Calu3 (cell line): ENCODE measurements at regions of chr2 and their contacts with region 1.

Region 1: GRCh38 chr2:225735844-225736243 is 336.3 kb downstream of the NYAP2 start:
- DNase-seq: peak; percentile 27
- H3K4me3 Mint-ChIP-seq: no peak overlapping the region
- H3K27ac Mint-ChIP-seq: no peak overlapping the region
- H3K4me1 Mint-ChIP-seq: peaks cover 46% of the 10 kb centered on the region
- H3K27me3 Mint-ChIP-seq: no peaks in the 10 kb centered on the region
- CTCF ChIP-seq: no peak

Region 2: GRCh38 chr2:225788571-225789094 is 52.8 kb after region 1 on chr2:
- CTCF ChIA-PET with region 1: no interaction called
- intact Hi-C with region 1: no loop called
- DNase-seq: no peak
- H3K4me3 Mint-ChIP-seq: no peak overlapping the region
- H3K27ac Mint-ChIP-seq: no peak overlapping the region
- H3K4me1 Mint-ChIP-seq: no peaks in the 10 kb centered on the region
- H3K27me3 Mint-ChIP-seq: no peaks in the 10 kb centered on the region
- CTCF ChIP-seq: no peak

Region 3: DNA sequence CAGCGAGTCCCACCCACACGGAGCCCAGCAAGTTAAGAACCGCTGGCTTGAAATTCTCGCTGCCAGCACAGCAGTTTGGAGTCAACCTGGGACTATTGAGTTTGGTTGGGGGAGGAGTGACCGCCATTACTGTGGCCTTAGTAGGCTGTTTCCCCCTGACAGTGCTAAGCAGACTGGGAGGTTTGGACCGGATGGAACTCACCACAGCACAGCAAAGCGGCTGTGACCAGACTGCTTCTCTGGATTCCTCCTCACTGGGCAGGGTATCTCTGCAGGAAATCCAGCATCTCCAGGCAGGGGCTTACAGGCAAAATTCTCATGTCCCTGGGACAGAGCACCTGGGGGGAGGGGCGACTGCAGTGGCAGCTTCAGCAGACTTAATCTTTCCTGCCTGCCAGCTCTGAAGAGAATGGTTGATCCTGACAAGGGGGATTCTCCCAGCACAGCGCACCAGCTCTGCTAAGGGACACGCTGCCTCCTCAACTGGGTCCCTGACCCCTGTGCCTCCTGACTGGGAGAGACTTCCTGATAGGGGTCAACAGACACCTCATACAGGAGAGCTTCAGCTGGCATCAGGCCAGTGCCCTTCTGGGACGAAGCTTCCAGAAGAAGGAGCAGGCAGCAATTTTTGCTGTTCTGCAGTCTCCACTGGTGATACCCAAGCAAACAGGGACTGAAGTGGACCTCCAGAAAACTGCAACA is 89.1 kb after region 1 on chr2:
- CTCF ChIA-PET with region 1: no interaction called
- intact Hi-C with region 1: no loop called
- DNase-seq: no peak
- H3K4me3 Mint-ChIP-seq: no peak overlapping the region
- H3K27ac Mint-ChIP-seq: no peak overlapping the region
- H3K4me1 Mint-ChIP-seq: no peaks in the 10 kb centered on the region
- H3K27me3 Mint-ChIP-seq: no peaks in the 10 kb centered on the region
- CTCF ChIP-seq: no peak

Region 4: DNA sequence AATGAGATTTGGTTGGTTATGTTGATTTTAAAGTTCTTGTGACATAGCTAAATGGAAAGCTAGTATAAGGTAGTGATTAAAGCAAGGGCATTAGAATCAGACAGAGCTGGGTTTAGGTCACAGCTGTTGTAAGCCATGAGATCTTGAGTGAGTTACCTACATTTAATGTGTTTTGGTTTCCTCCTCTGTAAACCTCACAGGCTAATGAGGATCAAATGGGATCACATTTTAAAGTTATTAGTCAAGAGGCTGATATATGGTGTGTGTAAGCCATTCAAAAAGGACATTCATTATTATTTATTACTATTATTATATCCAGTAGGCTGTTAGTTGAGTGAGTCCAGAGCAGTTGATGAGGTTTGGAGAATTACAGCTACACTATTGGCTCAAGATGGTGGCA is 647.6 kb after region 1 on chr2:
- CTCF ChIA-PET with region 1: interaction called, 11 read pairs
- intact Hi-C with region 1: no loop called
- DNase-seq: no peak
- H3K4me3 Mint-ChIP-seq: no peak overlapping the region
- H3K27ac Mint-ChIP-seq: no peak overlapping the region
- H3K4me1 Mint-ChIP-seq: no peaks in the 10 kb centered on the region
- H3K27me3 Mint-ChIP-seq: no peaks in the 10 kb centered on the region
- CTCF ChIP-seq: no peak